ENCODE measurements at regions of chr5 and their contacts with region 1.

Region 1: DNA sequence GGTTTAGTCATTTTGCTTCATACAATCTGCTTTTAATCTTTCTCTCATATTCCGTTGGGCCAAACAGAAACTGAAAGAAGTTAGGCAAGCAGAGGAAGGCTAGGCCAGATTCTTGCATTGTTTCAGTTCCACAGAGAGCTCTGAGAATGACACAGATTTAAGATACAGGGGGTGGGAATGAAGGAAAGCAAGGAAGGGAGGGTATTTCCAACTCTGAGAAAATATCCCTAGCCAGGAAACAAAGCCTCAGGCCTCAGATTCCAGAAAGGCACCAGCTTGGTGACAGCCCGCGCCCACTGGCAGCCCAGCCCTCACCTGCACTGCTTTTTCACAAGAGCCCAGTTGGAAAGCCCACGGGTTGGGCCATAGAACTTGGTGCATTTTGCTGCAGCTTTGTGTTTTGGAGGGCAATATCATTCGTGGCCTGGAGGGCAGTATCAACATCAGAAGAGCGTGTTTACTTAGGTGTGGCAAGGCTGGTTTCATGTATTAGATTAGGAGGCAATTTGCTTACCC is 63.5 kb downstream of the ENC1 start:
- DNase-seq: peak; percentile 79
- H3K4me3 ChIP-seq: peak overlapping the region in 1 of 3 experiments; percentile 27
- H3K27ac ChIP-seq: peak overlapping the region; percentile 73
- H3K4me1 ChIP-seq: peaks cover 29% of the 10 kb centered on the region
- H3K27me3 ChIP-seq: no peaks in the 10 kb centered on the region
- CTCF ChIP-seq: no peak
- POLR2A ChIP-seq: no peak

Region 2: DNA sequence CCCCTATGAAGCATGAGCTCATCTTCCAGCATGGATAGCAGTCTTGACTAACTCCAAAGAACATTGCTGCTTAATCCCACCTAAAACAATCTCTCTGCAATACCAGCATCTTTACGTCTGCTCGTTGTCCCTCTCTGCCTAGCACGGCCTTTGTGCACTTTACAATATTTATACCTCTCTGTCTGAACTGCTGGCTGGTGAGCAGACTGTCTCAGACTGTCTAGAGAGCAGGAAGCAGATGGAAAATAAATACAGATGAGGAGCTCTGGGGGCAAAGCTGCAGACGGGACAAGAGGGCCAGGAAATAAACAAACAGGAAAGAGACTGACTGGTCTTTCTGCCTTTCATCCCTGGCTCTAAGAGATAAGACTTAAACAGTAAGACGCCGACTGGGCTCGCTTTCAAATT is 161.3 kb before region 1 on chr5:
- CTCF ChIA-PET with region 1: interaction called, 4 read pairs
- POLR2A ChIA-PET with region 1: interaction called, 3 read pairs
- dilution Hi-C with region 1: no loop called
- intact Hi-C with region 1: loop called (anchors 1 kb)
- DNase-seq: peak; percentile 90
- H3K4me3 ChIP-seq: no peak overlapping the region
- H3K27ac ChIP-seq: peak overlapping the region; percentile 63
- H3K4me1 ChIP-seq: peaks cover 27% of the 10 kb centered on the region
- H3K27me3 ChIP-seq: no peaks in the 10 kb centered on the region
- CTCF ChIP-seq: no peak
- POLR2A ChIP-seq: peak; percentile 30

Region 3: DNA sequence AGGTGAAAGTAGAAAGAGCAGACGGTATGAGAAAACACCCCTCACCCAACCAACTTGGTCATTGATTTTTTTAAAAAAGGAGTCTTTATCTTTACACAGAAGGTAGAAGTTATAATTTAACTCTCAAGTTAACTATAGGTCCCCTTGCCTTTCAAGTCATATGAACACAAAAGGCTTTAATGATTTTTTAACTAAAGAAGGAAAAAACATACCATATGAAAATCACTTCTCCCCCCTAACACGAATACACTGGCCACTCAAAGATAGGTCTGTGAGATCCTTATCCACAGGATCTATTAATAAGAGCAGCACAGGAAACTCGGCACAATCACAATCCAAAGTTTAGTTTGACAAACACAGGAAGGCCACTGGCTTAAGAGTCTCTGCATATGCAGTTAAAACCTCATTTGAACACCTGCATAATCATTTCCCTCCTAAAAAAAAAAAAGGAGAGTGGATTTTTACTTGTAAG is 74.5 kb before region 1 on chr5:
- CTCF ChIA-PET with region 1: interaction called, 3 read pairs
- POLR2A ChIA-PET with region 1: no interaction called
- dilution Hi-C with region 1: no loop called
- intact Hi-C with region 1: loop called (anchors 2 kb)
- DNase-seq: peak; percentile 75
- H3K4me3 ChIP-seq: peak overlapping the region in 1 of 3 experiments; percentile 12
- H3K27ac ChIP-seq: peak overlapping the region; percentile 33
- H3K4me1 ChIP-seq: peaks cover 16% of the 10 kb centered on the region
- H3K27me3 ChIP-seq: no peaks in the 10 kb centered on the region
- CTCF ChIP-seq: no peak
- POLR2A ChIP-seq: no peak

Region 4: GRCh38 chr5:74543156-74543995 is 33.6 kb before region 1 on chr5:
- CTCF ChIA-PET with region 1: interaction called, 7 read pairs
- POLR2A ChIA-PET with region 1: no interaction called
- dilution Hi-C with region 1: no loop called
- intact Hi-C with region 1: loop called (anchors 1 kb)
- DNase-seq: peak; percentile 77
- H3K4me3 ChIP-seq: peak overlapping the region in 1 of 3 experiments; percentile 25
- H3K27ac ChIP-seq: peak overlapping the region; percentile 80
- H3K4me1 ChIP-seq: peaks cover 17% of the 10 kb centered on the region
- H3K27me3 ChIP-seq: no peaks in the 10 kb centered on the region
- CTCF ChIP-seq: no peak
- POLR2A ChIP-seq: peak; percentile 44

Region 5: DNA sequence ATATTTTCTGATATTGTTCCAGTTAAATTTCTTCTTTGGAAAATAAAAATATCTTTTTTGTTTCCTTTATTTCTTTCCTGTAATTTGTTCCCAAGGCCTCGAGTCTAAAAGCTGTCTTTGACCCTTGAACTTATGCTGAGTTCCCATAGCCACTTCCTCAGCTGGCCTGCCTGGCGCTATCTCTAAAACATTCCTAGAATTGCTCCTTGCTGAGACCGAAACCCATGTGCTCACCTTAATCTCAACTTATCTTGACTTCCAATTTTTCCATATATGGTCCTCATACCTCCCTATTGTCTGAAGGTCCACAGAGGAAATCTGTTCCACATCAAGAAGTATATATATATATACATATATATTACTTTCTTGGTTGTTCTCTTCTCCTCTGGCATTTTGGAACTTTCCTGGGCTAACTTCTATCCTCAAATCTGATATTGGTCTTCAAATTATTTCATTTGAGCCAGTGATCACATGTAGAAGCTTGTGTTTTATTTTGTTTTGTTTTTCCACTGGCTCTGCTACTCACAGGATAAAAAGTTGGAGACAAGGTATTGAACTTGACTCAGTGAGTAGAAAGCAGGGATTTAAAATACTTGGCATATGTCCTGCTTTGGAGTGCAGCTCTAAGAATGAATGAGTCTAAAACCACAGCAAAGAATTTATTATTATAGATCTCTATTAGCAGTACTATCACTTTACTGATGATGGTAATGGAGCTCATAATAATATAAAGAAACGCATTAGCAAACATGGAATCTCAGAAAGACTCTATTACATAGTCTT is 18.3 kb after region 1 on chr5:
- CTCF ChIA-PET with region 1: interaction called, 3 read pairs
- POLR2A ChIA-PET with region 1: interaction called, 4 read pairs
- dilution Hi-C with region 1: no loop called
- intact Hi-C with region 1: loop called (anchors 1 kb)
- DNase-seq: peak; percentile 89
- H3K4me3 ChIP-seq: no peak overlapping the region
- H3K27ac ChIP-seq: peak overlapping the region; percentile 89
- H3K4me1 ChIP-seq: peaks cover 34% of the 10 kb centered on the region
- H3K27me3 ChIP-seq: no peaks in the 10 kb centered on the region
- CTCF ChIP-seq: no peak
- POLR2A ChIP-seq: no peak

Region 6: GRCh38 chr5:74631081-74631953 is 54.3 kb after region 1 on chr5:
- CTCF ChIA-PET with region 1: interaction called, 6 read pairs
- POLR2A ChIA-PET with region 1: interaction called, 3 read pairs
- dilution Hi-C with region 1: no loop called
- intact Hi-C with region 1: loop called (anchors 1 kb)
- DNase-seq: peak; percentile 86
- H3K4me3 ChIP-seq: peak overlapping the region in 1 of 3 experiments; percentile 36
- H3K27ac ChIP-seq: peak overlapping the region; percentile 98
- H3K4me1 ChIP-seq: peaks cover 53% of the 10 kb centered on the region
- H3K27me3 ChIP-seq: no peaks in the 10 kb centered on the region
- CTCF ChIP-seq: no peak
- POLR2A ChIP-seq: no peak